HCT116 (cell line): ENCODE measurements at regions of chr14 and their contacts with region 1.

Region 1: GRCh38 chr14:75293920-75294642 is 15.5 kb downstream of the FOS start:
- DNase-seq: peak; percentile 88
- ATAC-seq: peak; percentile 92
- H3K4me3 ChIP-seq: peak overlapping the region; percentile 47 to 63
- H3K27ac ChIP-seq: peak overlapping the region; percentile 61
- H3K4me1 ChIP-seq: peaks cover 22 to 31% of the 10 kb centered on the region in 2 experiments
- H3K27me3 ChIP-seq: no peaks in the 10 kb centered on the region
- CTCF ChIP-seq: no peak
- POLR2A ChIP-seq: no peak
- RAD21 ChIP-seq: no peak

Region 2: GRCh38 chr14:75077794-75078193 is 216.3 kb before region 1 on chr14:
- CTCF ChIA-PET with region 1: no interaction called
- POLR2A ChIA-PET with region 1: no interaction called
- RAD21 ChIA-PET with region 1: no interaction called
- intact Hi-C with region 1: no loop called
- DNase-seq: no peak
- ATAC-seq: no peak
- H3K4me3 ChIP-seq: no peak overlapping the region
- H3K27ac ChIP-seq: no peak overlapping the region
- H3K4me1 ChIP-seq: no peaks in the 10 kb centered on the region
- H3K27me3 ChIP-seq: no peaks in the 10 kb centered on the region
- CTCF ChIP-seq: no peak
- POLR2A ChIP-seq: no peak
- RAD21 ChIP-seq: no peak

Region 3: GRCh38 chr14:75126679-75127473 is 167.2 kb before region 1 on chr14 and contains the start of gene NEK9:
- CTCF ChIA-PET with region 1: interaction called, 12 read pairs
- POLR2A ChIA-PET with region 1: interaction called, 10 read pairs
- RAD21 ChIA-PET with region 1: interaction called, 4 to 5 read pairs
- intact Hi-C with region 1: loop called (anchors 1 kb)
- DNase-seq: peak; percentile 83
- ATAC-seq: peak; percentile 89
- H3K4me3 ChIP-seq: peak within 1 kb of the TSS; percentile 78 to 86
- H3K27ac ChIP-seq: peak within 1 kb of the TSS; percentile 94
- H3K4me1 ChIP-seq: peaks cover 33 to 43% of the 10 kb centered on the region in 2 experiments
- H3K27me3 ChIP-seq: no peaks in the 10 kb centered on the region
- CTCF ChIP-seq: no peak
- POLR2A ChIP-seq: peak; percentile 67
- RAD21 ChIP-seq: 0 out of 2 replicates have a peak, but pooled peaks have one; percentile 2
- total RNA-seq, gene NEK9: 64.4 TPM

Region 4: DNA sequence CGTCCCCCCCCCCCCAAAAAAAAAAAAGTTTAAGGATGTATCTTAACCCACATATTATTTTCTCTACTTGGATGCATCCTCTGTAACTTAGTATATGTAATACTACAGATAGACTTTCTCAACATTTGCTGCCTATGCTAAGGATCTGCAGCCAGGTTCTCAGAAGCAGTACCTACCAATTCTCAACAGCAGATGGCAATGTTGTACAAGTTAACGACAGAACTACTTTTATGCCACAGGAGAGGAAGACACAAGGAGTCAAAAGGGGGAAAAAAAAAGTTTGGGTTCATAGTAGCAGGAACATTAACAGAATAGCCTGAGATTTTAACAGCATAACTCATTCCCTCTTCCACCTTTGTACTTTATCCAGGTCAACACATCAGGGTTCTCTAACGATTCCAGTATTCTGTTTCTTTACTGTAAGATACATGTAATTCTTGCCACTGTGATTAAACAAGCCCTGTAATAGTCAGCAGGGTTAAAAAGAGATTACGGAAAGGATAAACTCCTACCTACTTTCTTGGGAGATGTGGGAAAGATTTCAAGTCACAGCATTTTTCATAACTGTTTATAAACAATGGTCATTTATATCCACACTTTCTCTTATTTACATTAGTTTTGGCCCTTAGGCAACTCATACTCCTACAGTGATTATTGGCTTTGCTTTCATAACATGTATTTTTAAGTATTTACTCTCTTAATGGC is 161.5 kb before region 1 on chr14:
- CTCF ChIA-PET with region 1: interaction called, 12 read pairs
- POLR2A ChIA-PET with region 1: interaction called, 10 read pairs
- RAD21 ChIA-PET with region 1: interaction called, 4 to 5 read pairs
- intact Hi-C with region 1: loop called (anchors 1 kb)
- DNase-seq: peak; percentile 65
- ATAC-seq: peak; percentile 79
- H3K4me3 ChIP-seq: no peak overlapping the region
- H3K27ac ChIP-seq: no peak overlapping the region
- H3K4me1 ChIP-seq: peaks cover 10 to 15% of the 10 kb centered on the region in 2 experiments
- H3K27me3 ChIP-seq: no peaks in the 10 kb centered on the region
- CTCF ChIP-seq: peak; percentile 64 to 79 (median 75)
- POLR2A ChIP-seq: no peak
- RAD21 ChIP-seq: peak; percentile 88

Region 5: GRCh38 chr14:75141967-75142366 is 152.1 kb before region 1 on chr14:
- CTCF ChIA-PET with region 1: interaction called, 12 read pairs
- POLR2A ChIA-PET with region 1: interaction called, 4 read pairs
- RAD21 ChIA-PET with region 1: interaction called in 1 of 2 experiments, 3 read pairs
- intact Hi-C with region 1: no loop called
- DNase-seq: no peak
- ATAC-seq: peak; percentile 63; the same call in 1 of the 2 replicates
- H3K4me3 ChIP-seq: no peak overlapping the region
- H3K27ac ChIP-seq: no peak overlapping the region
- H3K4me1 ChIP-seq: no peaks in the 10 kb centered on the region
- H3K27me3 ChIP-seq: no peaks in the 10 kb centered on the region
- CTCF ChIP-seq: peak; percentile 44 to 58 (median 51); a peak in 5 of 6 replicates
- POLR2A ChIP-seq: no peak
- RAD21 ChIP-seq: peak; percentile 64

Region 6: GRCh38 chr14:75176142-75176820 is 117.8 kb before region 1 on chr14 and contains the start of gene TMED10:
- CTCF ChIA-PET with region 1: interaction called, 3 read pairs
- POLR2A ChIA-PET with region 1: no interaction called
- RAD21 ChIA-PET with region 1: no interaction called
- intact Hi-C with region 1: loop called (anchors 1 kb)
- DNase-seq: peak; percentile 78
- ATAC-seq: peak; percentile 80
- H3K4me3 ChIP-seq: peak within 1 kb of the TSS; percentile 67 to 88
- H3K27ac ChIP-seq: peak within 1 kb of the TSS; percentile 93
- H3K4me1 ChIP-seq: peaks cover 2 to 13% of the 10 kb centered on the region in 2 experiments; a peak in 2 of 4 replicates
- H3K27me3 ChIP-seq: no peaks in the 10 kb centered on the region
- CTCF ChIP-seq: no peak
- POLR2A ChIP-seq: peak; percentile 59
- RAD21 ChIP-seq: no peak
- total RNA-seq, gene TMED10: 303 TPM

Region 7: DNA sequence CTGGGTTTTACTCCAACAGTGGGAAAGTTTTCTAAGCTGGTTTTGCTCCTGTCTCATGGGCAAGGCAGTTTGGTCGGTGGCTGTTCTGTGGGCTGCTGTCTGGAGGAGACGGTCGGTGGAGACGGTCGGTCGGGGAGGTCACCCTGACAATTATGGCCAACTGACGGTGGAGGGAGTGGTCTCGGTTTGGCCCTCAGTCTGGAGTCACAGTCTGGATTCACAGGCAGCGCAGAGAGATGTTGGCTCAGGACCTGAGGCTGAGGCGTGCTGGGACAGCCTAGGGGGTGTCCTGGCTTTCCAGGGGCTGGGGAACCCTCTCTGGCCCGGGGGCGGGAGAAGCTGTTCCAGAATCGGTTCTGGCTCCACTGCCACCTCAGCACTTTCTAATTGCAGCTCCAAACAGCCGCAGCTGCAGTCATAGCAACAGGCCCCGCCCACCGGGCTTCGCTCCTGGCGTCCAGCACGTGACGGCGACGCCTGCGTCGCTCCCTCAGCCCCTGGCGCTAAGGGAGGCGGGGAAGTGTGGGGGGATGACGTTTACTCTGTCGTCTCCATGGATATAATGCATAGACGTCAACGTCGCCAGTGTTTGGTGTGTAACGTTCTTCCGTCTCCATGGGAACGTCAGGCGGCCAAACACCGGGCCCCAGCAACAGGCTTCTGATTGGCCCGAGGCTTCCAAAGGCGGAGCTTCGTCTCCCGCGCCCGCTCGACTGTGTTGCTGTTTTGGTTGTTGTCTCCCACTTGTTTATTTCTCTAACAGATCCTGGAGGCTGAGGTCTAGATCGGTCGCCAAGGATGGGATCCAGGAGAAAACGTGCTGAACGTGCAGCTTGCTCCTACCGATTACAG is 35.2 kb before region 1 on chr14:
- CTCF ChIA-PET with region 1: interaction called, 10 read pairs
- POLR2A ChIA-PET with region 1: no interaction called
- RAD21 ChIA-PET with region 1: interaction called in 1 of 2 experiments, 4 read pairs
- intact Hi-C with region 1: loop called (anchors 2 kb)
- DNase-seq: peak; percentile 99
- ATAC-seq: peak; percentile 96
- H3K4me3 ChIP-seq: peak overlapping the region; percentile 37 to 50
- H3K27ac ChIP-seq: peak overlapping the region; percentile 56
- H3K4me1 ChIP-seq: peaks cover 17 to 40% of the 10 kb centered on the region in 2 experiments
- H3K27me3 ChIP-seq: no peaks in the 10 kb centered on the region
- CTCF ChIP-seq: no peak
- POLR2A ChIP-seq: no peak
- RAD21 ChIP-seq: no peak

Region 8: DNA sequence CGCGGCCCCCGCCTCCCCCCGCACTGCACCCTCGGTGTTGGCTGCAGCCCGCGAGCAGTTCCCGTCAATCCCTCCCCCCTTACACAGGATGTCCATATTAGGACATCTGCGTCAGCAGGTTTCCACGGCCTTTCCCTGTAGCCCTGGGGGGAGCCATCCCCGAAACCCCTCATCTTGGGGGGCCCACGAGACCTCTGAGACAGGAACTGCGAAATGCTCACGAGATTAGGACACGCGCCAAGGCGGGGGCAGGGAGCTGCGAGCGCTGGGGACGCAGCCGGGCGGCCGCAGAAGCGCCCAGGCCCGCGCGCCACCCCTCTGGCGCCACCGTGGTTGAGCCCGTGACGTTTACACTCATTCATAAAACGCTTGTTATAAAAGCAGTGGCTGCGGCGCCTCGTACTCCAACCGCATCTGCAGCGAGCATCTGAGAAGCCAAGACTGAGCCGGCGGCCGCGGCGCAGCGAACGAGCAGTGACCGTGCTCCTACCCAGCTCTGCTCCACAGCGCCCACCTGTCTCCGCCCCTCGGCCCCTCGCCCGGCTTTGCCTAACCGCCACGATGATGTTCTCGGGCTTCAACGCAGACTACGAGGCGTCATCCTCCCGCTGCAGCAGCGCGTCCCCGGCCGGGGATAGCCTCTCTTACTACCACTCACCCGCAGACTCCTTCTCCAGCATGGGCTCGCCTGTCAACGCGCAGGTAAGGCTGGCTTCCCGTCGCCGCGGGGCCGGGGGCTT is 15.5 kb before region 1 on chr14 and contains the start of gene FOS:
- CTCF ChIA-PET with region 1: no interaction called
- POLR2A ChIA-PET with region 1: interaction called, 10 read pairs
- RAD21 ChIA-PET with region 1: no interaction called
- intact Hi-C with region 1: loop called (anchors 2 kb)
- DNase-seq: peak; percentile 92
- ATAC-seq: peak; percentile 83
- H3K4me3 ChIP-seq: peak within 1 kb of the TSS; percentile 95 to 97
- H3K27ac ChIP-seq: peak within 1 kb of the TSS; percentile 70
- H3K4me1 ChIP-seq: peaks cover 10 to 39% of the 10 kb centered on the region in 2 experiments
- H3K27me3 ChIP-seq: no peaks in the 10 kb centered on the region
- CTCF ChIP-seq: no peak
- POLR2A ChIP-seq: peak; percentile 98
- RAD21 ChIP-seq: no peak
- total RNA-seq, gene FOS: 50.4 TPM